ENCODE measurements at regions of chr19 and their contacts with region 1.

Region 1: DNA sequence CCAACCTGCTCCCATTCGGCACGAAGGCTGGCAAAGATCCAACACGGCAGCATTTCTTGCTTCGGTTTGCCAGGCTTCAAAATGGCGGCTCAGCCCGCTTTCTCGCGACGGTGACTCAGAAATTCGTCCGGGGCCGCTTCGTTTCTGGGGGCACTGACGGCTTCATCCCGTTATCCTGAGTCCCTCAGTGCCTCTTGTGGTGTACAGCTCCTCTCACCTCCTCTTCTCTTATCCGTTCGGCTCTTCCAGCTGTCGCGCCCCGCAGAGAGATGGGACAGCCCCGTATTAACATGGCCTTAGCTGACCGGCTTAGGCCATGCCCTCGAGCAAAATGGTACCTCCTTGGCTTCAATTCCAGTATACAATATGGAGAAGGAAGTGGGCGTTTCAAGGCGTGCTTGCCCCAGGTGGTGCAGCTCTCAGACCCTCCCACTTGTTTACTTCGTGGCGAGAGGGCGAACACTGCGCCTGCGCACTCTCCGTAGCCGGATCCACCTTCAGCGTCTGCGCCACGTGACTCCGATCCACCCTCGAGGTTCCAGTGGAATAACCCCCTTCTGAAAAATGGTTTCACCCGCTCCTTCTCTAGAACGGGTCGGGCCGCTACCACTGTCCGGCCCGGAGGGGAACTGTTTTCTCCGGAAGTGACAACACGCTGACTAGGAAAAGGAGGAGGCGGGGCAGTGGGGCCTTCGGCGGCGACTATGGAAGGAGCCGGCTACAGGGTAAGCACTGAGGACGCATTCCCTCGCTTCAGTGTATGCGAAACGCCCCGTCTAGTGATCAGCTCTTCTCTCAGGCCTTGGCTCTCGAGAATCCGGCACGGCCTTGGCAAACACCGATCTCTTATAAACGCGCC is at the starts of genes AKT1S1 and TBC1D17:
- DNase-seq: peak; percentile 89 to 99 (median 94)
- ATAC-seq: peak; percentile 87
- H3K4me3 ChIP-seq: peak within 1 kb of the TSS; percentile 84
- H3K27ac ChIP-seq: peak within 1 kb of the TSS; percentile 99
- H3K4me1 ChIP-seq: peaks cover 9 to 76% of the 10 kb centered on the region in 2 experiments; a peak in 4 of 5 replicates
- H3K27me3 ChIP-seq: no peaks in the 10 kb centered on the region
- CTCF ChIP-seq: no peak; a peak in 1 of 6 replicates
- EP300 ChIP-seq: no peak
- POLR2A ChIP-seq: peak; percentile 88
- RAD21 ChIP-seq: no peak
- polyA plus RNA-seq, gene AKT1S1: 1.2 TPM
- polyA plus RNA-seq, gene TBC1D17: 0.42 to 0.46 TPM

Region 2: DNA sequence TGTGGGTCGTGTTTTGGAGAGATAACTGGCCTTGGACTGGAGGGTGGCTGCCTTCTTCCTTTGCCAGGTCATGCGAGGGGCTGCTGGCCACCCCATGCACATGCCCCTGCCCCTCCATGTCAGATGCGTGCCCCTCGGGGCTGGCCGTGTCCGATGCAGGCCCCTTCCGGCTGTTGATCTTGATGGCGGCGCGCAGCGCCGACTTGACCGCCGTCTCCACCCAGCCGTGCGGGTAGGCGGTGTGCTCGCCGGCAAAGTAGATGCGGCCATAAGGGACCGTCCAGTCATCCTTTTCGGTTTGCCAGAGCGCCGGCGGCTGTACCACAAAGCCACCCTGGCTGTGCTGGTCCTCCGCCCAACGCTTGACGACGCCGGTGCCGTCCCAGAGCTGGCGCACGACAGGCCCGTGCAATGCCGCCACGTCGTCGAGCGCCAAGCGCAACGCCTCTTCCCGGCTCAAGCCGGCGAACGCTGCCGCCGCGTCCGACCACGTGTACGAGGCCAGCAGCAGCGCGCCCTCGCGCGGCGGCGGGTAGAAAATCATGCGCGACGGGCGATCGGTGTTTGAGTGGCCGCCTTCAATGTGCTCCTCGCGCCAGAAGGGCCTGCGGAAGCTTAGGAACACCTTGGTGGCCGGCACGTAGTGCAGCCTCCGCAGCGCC is 12.6 kb after region 1 on chr19:
- CTCF ChIA-PET with region 1: no interaction called
- POLR2A ChIA-PET with region 1: interaction called, 12 read pairs
- in situ Hi-C with region 1: no loop called
- intact Hi-C with region 1: no loop called
- DNase-seq: peak; percentile 64 to 95 (median 68)
- ATAC-seq: peak; percentile 86
- H3K4me3 ChIP-seq: peak overlapping the region; percentile 47
- H3K27ac ChIP-seq: peak overlapping the region; percentile 89
- H3K4me1 ChIP-seq: peaks cover 12 to 49% of the 10 kb centered on the region in 2 experiments
- H3K27me3 ChIP-seq: peaks cover 2 to 3% of the 10 kb centered on the region in 2 experiments; a peak in 3 of 5 replicates
- CTCF ChIP-seq: peak; percentile 89 to 94 (median 91)
- EP300 ChIP-seq: peak; percentile 34; the same call in 1 of the 2 replicates
- POLR2A ChIP-seq: peak; percentile 63
- RAD21 ChIP-seq: peak; percentile 32 to 70; a peak in 3 of 4 replicates

Measured in K562 (cell line).